T-cell (primary cell): ENCODE measurements at regions of chr1 and their contacts with region 1.

Region 1: GRCh38 chr1:44775078-44775929 is at the start of gene RPS8:
- DNase-seq: peak; percentile 78 to 95 (median 86)
- ATAC-seq: peak; percentile 80 to 86 (median 84)
- H3K4me3 ChIP-seq: peak within 1 kb of the TSS; percentile 65 to 88
- H3K4me3 Mint-ChIP-seq: peak within 1 kb of the TSS; percentile 92 to 94 (median 93)
- H3K27ac ChIP-seq: peak within 1 kb of the TSS; percentile 81
- H3K27ac Mint-ChIP-seq: peak within 1 kb of the TSS; percentile 94 to 95
- H3K4me1 ChIP-seq: peaks cover 14 to 30% of the 10 kb centered on the region in 2 experiments
- H3K4me1 Mint-ChIP-seq: peaks cover 33 to 39% (median 37%) of the 10 kb centered on the region in 3 donors
- H3K27me3 ChIP-seq: no peaks in the 10 kb centered on the region
- H3K27me3 Mint-ChIP-seq: no peaks in the 10 kb centered on the region
- total RNA-seq, gene RPS8: 2,713 to 2,895 (median 2,873) TPM

Region 2: GRCh38 chr1:44328671-44329416 is 446.5 kb before region 1 on chr1:
- CTCF ChIA-PET with region 1: no interaction called
- POLR2A ChIA-PET with region 1: no interaction called
- DNase-seq: no peak
- ATAC-seq: no peak
- H3K4me3 ChIP-seq: no peak overlapping the region
- H3K4me3 Mint-ChIP-seq: no peak overlapping the region
- H3K27ac ChIP-seq: no peak overlapping the region
- H3K27ac Mint-ChIP-seq: no peak overlapping the region
- H3K4me1 ChIP-seq: no peaks in the 10 kb centered on the region
- H3K4me1 Mint-ChIP-seq: peaks cover 4 to 29% (median 12%) of the 10 kb centered on the region in 3 donors
- H3K27me3 ChIP-seq: no peaks in the 10 kb centered on the region
- H3K27me3 Mint-ChIP-seq: no peaks in the 10 kb centered on the region

Region 3: DNA sequence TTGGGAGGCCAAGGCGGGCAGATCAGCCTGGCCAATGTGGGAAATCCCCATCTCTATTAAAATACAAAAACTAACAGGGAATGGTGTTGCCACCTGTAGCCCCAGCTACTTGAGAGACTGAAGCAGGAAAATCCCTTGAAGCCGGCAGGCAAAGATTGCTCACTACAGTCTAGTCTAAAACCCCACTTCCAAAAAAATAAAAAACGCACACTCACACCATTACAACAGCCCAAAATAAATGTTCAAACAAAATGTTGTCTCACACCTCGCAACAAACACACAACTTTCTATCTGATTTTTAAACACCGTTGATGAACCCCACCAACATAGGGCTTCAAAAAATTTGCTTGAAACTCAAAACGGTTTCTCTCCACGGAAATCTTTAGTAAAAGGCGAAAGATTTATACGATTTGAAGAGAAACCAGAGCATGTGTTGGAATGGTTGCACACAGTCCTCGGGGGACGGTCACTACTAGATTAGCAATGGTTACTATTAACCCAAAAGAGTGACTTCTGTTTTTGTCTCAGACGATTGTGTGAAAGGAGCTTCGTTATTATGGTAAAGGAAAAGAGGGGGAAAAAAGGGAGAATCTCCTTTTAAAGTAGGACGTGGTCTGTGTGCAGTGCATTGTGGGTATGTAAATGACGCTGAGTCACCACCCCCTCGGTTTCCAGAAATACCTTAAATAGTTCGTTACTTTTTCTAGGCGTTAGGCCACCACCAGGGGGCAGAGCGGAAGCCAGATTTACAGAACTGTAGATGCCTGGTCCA is 44.4 kb before region 1 on chr1 and contains the start of gene RNU5D-1:
- CTCF ChIA-PET with region 1: interaction called, 3 to 37 read pairs
- POLR2A ChIA-PET with region 1: interaction called in 1 of 2 experiments, 14 read pairs
- DNase-seq: peak; percentile 82 to 96 (median 90)
- ATAC-seq: peak; percentile 83 to 85 (median 84)
- H3K4me3 ChIP-seq: peak within 1 kb of the TSS in 1 of 2 donors; percentile 45
- H3K4me3 Mint-ChIP-seq: peak within 1 kb of the TSS; percentile 62 to 80 (median 69)
- H3K27ac ChIP-seq: peak within 1 kb of the TSS; percentile 99
- H3K27ac Mint-ChIP-seq: peak within 1 kb of the TSS; percentile 100
- H3K4me1 ChIP-seq: peaks cover 6 to 25% of the 10 kb centered on the region in 2 experiments
- H3K4me1 Mint-ChIP-seq: peaks cover 26 to 38% (median 29%) of the 10 kb centered on the region in 3 donors
- H3K27me3 ChIP-seq: no peaks in the 10 kb centered on the region
- H3K27me3 Mint-ChIP-seq: no peaks in the 10 kb centered on the region
- total RNA-seq, gene RNU5D-1: 21.4 TPM in 1 of 5 donors, not detected in the others